Cardiac septum (tissue), 1 donor: ENCODE measurements at regions of chr16 and their contacts with region 1.

Region 1: GRCh38 chr16:83826146-83826913 is 18.6 kb downstream of the HSBP1 start:
- DNase-seq: peak; percentile 92

Region 2: GRCh38 chr16:83771306-83771942 is 54.9 kb before region 1 on chr16:
- intact Hi-C with region 1: no loop called
- DNase-seq: peak; percentile 79

Region 3: GRCh38 chr16:83878838-83879237 is 52.5 kb after region 1 on chr16:
- intact Hi-C with region 1: loop called (anchors 5 kb)
- DNase-seq: no peak

Region 4: GRCh38 chr16:83913245-83913633 is 86.9 kb after region 1 on chr16:
- intact Hi-C with region 1: no loop called
- DNase-seq: peak; percentile 87

Region 5: GRCh38 chr16:83940630-83941378 is 114.5 kb after region 1 on chr16:
- intact Hi-C with region 1: no loop called
- DNase-seq: no peak